Left lung (tissue), 14 donors: ENCODE measurements at regions of chr5 and their contacts with region 1.

Region 1: DNA sequence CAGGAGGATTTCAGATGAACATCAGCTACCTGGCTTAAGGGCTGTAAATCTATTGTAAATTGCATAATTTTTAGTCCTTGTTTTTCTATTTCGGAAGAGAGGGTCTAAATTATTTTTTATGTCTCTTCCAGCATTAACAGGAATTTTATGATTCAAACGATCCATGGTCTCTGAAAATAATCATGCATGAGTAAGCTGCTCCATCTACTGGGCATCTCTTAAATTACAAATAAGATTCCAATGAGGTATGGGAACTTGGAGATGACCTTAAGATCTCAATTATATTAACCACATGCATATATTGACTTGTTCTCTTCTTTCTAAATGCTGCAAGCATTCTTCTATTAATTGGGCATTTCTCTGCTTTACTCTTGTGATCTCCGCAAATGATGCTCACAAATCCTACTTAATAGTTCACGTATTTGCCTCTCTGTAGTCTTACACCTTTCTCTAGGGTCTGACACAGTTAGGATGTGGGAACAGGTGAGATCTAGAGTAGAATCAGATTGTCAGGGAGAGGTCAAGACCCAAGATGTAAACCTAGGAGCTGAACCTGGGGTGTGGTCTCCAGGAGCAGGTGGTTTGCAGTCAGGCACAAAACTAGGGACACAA is 86.9 kb downstream of the NUDT12 start:
- DNase-seq: peak in 2 of 4 donors; percentile 31 to 48
- ATAC-seq: peak; percentile 86
- H3K4me3 ChIP-seq: no peak overlapping the region
- H3K27ac ChIP-seq: no peak overlapping the region
- H3K4me1 ChIP-seq: peaks cover 3 to 4% of the 10 kb centered on the region in 2 donors
- H3K27me3 ChIP-seq: no peaks in the 10 kb centered on the region
- CTCF ChIP-seq: peak; percentile 52 to 54

Region 2: DNA sequence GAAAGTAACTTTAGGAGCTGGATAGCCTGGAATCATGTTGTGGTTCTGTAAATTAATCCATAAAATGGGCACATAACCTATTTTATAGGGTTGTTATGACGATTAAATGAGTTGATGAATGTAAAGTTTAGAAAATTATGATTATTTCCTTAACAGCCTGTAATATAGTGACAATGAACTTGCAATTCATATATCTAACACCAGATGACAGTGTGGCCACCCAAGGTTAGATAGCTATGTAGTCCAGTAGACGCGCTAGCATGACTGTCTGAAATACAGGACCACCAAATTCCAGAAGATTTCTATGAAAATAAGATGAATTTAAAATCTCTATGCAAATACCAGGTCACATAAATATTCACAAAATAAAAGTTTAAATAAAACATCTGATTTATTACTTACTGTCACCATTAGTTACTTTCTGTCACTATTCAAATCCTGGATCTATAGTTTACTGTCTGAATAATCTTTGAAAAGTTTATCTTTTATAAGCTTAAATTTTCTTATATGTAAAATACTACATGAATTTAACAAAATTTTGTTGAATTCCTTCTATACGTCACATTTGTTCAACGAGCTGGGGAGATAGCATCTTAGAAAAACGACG is 243.2 kb before region 1 on chr5:
- intact Hi-C with region 1: loop called in 1 of 2 experiments (anchors 5 kb)
- DNase-seq: peak in 1 of 4 donors; percentile 23
- ATAC-seq: peak; percentile 95
- H3K4me3 ChIP-seq: no peak overlapping the region
- H3K27ac ChIP-seq: no peak overlapping the region
- H3K4me1 ChIP-seq: no peaks in the 10 kb centered on the region
- H3K27me3 ChIP-seq: no peaks in the 10 kb centered on the region
- CTCF ChIP-seq: peak; percentile 50 to 83

Region 3: DNA sequence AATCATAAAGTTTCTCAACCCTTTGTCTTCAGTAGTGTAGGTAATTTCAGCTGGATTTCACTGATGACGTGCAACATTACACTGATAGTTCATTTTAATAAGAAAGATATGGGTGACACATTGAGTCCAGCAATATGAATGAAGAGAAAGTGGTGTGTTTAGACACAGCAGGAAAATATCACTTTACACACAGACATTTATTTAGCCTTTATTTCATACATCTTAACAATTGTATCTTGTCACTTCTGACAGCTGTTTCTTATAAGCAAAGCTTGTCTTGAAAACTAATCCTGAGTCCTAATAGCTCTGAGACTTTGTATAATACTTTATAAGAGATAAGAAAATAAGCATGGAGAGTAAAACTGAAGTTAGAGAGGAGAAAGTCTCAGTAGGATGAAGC is 807.4 kb after region 1 on chr5:
- intact Hi-C with region 1: no loop called
- DNase-seq: peak in 2 of 4 donors; percentile 35 to 50
- ATAC-seq: no peak
- H3K4me3 ChIP-seq: no peak overlapping the region
- H3K27ac ChIP-seq: no peak overlapping the region
- H3K4me1 ChIP-seq: no peaks in the 10 kb centered on the region
- H3K27me3 ChIP-seq: no peaks in the 10 kb centered on the region
- CTCF ChIP-seq: no peak